ENCODE measurements at regions of chr1 and their contacts with region 1.

Region 1: GRCh38 chr1:9004700-9005394 is 21.4 kb downstream of the SLC2A7 start:
- DNase-seq: peak; percentile 77 to 83
- ATAC-seq: peak; percentile 93 to 95
- H3K4me3 ChIP-seq: no peak overlapping the region
- H3K27ac ChIP-seq: peak overlapping the region in 1 of 2 experiments; percentile 66; a peak in 4 of 6 replicates
- H3K4me1 ChIP-seq: peaks cover 15% of the 10 kb centered on the region
- CTCF ChIP-seq: peak; percentile 72
- EP300 ChIP-seq: no peak
- POLR2A ChIP-seq: no peak
- RAD21 ChIP-seq: peak; percentile 72 to 79

Region 2: DNA sequence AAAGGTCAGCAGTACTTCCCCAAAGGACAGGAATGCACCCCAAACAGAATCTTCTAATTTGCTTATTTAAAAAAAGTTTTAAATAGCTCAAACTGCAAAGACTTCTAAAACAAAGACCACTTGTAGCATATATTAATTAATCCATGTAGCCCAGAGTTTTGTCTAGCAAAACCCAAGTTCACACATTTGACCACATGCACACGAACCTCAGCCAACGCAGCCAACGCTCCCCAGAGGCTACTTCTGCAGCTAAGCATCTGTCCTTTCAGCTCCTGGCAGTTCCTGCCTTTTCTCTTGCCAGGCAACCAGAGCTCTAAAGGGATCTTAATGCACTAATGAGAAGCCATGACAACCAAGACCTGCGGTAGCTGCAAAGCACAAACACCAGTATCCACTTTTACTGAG is 277.0 kb before region 1 on chr1:
- CTCF ChIA-PET with region 1: no interaction called
- POLR2A ChIA-PET with region 1: no interaction called
- DNase-seq: no peak
- ATAC-seq: no peak
- H3K4me3 ChIP-seq: no peak overlapping the region
- H3K27ac ChIP-seq: no peak overlapping the region
- H3K4me1 ChIP-seq: peaks cover 13% of the 10 kb centered on the region; the same call in 2 of the 3 replicates
- CTCF ChIP-seq: no peak
- EP300 ChIP-seq: no peak
- POLR2A ChIP-seq: no peak
- RAD21 ChIP-seq: no peak

Region 3: DNA sequence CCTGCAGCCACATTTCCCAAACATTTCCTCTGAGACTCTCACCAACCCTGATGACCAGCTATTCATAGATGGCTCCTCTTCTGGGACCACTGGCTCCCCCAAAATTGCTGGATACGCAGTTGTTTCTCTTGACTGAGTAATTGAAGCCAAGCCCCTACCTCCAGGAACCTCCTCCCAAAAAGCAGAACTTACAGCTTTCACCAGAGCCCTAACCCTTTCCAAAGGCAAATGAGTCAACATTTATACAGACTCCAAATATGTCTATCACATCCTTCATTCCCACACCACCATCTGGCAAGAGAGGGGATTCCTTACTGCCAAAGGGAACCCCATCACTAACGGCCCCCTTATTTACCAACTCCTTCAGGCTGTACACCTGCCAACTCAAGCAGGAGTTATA is 79.4 kb before region 1 on chr1:
- CTCF ChIA-PET with region 1: interaction called, 67 read pairs
- POLR2A ChIA-PET with region 1: no interaction called
- DNase-seq: no peak
- ATAC-seq: no peak
- H3K4me3 ChIP-seq: no peak overlapping the region
- H3K27ac ChIP-seq: no peak overlapping the region
- H3K4me1 ChIP-seq: no peaks in the 10 kb centered on the region
- CTCF ChIP-seq: no peak
- EP300 ChIP-seq: no peak
- POLR2A ChIP-seq: no peak
- RAD21 ChIP-seq: no peak

Region 4: DNA sequence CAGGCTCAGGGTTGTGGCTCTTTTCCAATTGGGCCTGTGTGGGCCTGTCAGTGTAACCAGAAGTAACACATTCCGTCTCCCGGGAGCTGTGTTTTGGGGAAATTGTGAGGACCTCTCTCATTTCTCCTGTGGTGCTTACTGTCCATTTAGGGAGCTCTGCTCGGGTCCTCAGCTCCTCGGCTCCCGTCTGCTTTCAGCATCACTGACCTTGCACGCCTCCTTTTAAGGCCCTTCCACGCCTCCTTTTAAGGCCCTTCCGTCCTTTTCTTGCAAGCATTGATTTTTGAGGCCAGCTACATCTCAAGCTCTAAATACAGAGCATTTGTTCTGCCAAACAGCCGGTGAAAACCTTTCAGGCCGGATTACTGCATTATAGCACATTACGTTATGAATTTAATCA is 49.4 kb before region 1 on chr1:
- CTCF ChIA-PET with region 1: interaction called, 18 read pairs
- POLR2A ChIA-PET with region 1: no interaction called
- DNase-seq: no peak
- ATAC-seq: no peak
- H3K4me3 ChIP-seq: no peak overlapping the region
- H3K27ac ChIP-seq: no peak overlapping the region
- H3K4me1 ChIP-seq: no peaks in the 10 kb centered on the region
- CTCF ChIP-seq: no peak
- EP300 ChIP-seq: no peak
- POLR2A ChIP-seq: no peak
- RAD21 ChIP-seq: no peak

Region 5: DNA sequence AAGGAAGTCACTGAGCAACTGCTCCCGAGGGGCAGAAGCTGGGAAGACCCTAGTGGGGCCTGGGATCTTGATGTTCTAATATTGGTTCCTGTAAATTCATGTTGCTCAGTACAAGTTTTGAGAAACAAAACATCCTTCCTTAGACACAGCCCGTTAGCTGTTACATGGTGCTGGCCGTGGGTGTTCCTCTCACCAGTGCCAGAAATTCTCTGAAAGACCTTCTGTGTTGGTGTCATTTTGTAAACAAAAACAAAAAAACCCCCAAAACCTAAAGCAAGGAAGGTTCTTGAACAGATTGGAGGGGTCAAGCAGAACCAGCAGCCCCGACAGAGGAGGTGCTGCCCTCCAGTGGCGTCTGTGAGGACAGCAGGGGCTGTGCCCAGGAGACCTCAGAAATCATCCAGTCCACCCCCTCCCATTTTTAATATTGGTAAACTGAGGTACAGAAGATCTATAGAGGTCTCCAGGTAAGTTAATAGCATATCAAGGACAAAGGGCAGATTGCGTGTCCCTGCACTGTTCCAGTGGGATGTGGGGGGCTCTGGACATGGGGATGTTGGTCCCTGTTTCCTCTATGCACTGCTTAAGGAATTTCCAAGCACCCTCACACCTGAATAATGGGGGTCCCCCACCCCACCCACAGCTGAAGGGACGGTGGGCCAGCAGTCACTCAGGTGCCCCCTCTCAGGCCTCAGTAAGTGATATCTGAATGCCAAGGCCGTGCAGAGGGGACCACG is 16.8 kb before region 1 on chr1:
- CTCF ChIA-PET with region 1: interaction called, 71 read pairs
- POLR2A ChIA-PET with region 1: interaction called, 4 read pairs
- DNase-seq: peak; percentile 44 to 53
- ATAC-seq: peak; percentile 57 to 74; a peak in 3 of 6 replicates
- H3K4me3 ChIP-seq: no peak overlapping the region
- H3K27ac ChIP-seq: peak overlapping the region; percentile 79 to 95
- H3K4me1 ChIP-seq: peaks cover 31% of the 10 kb centered on the region
- CTCF ChIP-seq: peak; percentile 81
- EP300 ChIP-seq: no peak
- POLR2A ChIP-seq: no peak
- RAD21 ChIP-seq: peak; percentile 77 to 79

Region 6: DNA sequence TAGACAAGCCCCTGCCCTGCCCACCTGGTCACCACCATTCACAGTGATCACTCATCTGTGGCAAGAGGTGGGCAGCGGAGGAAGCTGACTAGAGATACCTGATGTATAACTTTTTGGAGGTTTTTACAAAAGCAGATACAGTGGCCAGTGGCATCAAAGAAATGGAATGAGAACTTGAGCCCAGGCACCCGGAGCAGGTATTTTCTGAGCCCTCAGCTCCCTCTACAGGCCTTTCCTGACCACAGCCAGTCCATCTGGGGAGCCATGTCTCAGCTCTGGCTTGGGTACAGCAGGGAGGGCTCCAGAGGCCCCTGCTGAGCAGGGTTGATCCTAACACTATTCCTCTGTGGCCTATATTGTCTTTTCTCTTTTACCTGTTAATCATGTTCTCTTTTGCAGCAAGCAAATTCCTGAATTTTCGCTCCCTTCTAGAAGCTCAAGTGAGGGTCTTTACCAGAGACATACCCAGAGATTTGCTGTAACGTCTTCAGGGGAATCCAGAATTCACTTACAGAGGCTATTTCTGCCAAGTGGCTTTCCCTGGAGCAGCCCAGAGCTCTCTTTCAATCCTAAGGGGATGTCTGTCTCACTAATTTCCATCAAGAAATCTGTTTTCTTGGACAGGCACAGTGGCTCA is 96.8 kb after region 1 on chr1:
- CTCF ChIA-PET with region 1: interaction called, 36 read pairs
- POLR2A ChIA-PET with region 1: interaction called, 3 read pairs
- DNase-seq: peak; percentile 51 to 58
- ATAC-seq: peak; percentile 95 to 96
- H3K4me3 ChIP-seq: no peak overlapping the region
- H3K27ac ChIP-seq: no peak overlapping the region
- H3K4me1 ChIP-seq: no peaks in the 10 kb centered on the region
- CTCF ChIP-seq: peak; percentile 59
- EP300 ChIP-seq: no peak
- POLR2A ChIP-seq: no peak
- RAD21 ChIP-seq: peak; percentile 67 to 70